ENCODE measurements at regions of chrX and their contacts with region 1.

Region 1: GRCh38 chrX:139559383-139560042 is 29.0 kb downstream of the F9 start:
- DNase-seq: no peak
- H3K4me3 Mint-ChIP-seq: no peak overlapping the region
- H3K27ac Mint-ChIP-seq: no peak overlapping the region
- H3K4me1 Mint-ChIP-seq: no peaks in the 10 kb centered on the region
- H3K27me3 Mint-ChIP-seq: peaks cover 2% of the 10 kb centered on the region

Region 2: GRCh38 chrX:139126493-139126892 is 433.0 kb before region 1 on chrX:
- CTCF ChIA-PET with region 1: no interaction called
- POLR2A ChIA-PET with region 1: no interaction called
- intact Hi-C with region 1: loop called (anchors 10 kb)
- DNase-seq: peak; percentile 13
- H3K4me3 Mint-ChIP-seq: no peak overlapping the region
- H3K27ac Mint-ChIP-seq: no peak overlapping the region
- H3K4me1 Mint-ChIP-seq: no peaks in the 10 kb centered on the region
- H3K27me3 Mint-ChIP-seq: no peaks in the 10 kb centered on the region

Region 3: DNA sequence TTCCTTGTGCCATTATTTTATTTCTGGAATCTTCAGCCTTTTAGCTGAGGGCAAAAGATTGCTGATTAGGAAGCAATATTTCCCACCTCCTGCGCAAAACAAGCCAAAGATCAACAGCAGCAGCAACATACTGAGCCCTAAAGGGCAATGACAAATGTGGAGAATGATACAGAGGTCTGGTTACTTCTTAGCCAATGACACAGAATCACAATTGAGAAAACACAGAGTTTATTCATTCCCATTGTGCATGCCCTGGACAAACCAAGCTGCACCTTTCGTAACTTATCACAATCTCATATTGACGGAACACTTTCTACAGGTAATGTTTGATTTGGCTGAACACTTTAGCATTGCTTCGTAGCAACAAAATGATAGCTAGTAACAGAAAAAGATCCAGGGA is 15.6 kb before region 1 on chrX:
- CTCF ChIA-PET with region 1: no interaction called
- POLR2A ChIA-PET with region 1: no interaction called
- intact Hi-C with region 1: no loop called
- DNase-seq: no peak
- H3K4me3 Mint-ChIP-seq: no peak overlapping the region
- H3K27ac Mint-ChIP-seq: no peak overlapping the region
- H3K4me1 Mint-ChIP-seq: no peaks in the 10 kb centered on the region
- H3K27me3 Mint-ChIP-seq: peaks cover 2% of the 10 kb centered on the region

Region 4: GRCh38 chrX:140298960-140299825 is 739.7 kb after region 1 on chrX:
- CTCF ChIA-PET with region 1: no interaction called
- POLR2A ChIA-PET with region 1: no interaction called
- intact Hi-C with region 1: no loop called
- DNase-seq: no peak
- H3K4me3 Mint-ChIP-seq: no peak overlapping the region
- H3K27ac Mint-ChIP-seq: no peak overlapping the region
- H3K4me1 Mint-ChIP-seq: no peaks in the 10 kb centered on the region
- H3K27me3 Mint-ChIP-seq: no peaks in the 10 kb centered on the region

Measured in activated CD4-positive, alpha-beta memory T cell treated with anti-CD3 and anti-CD28 coated beads for 36 hours (primary cell).